Adrenal gland (tissue), 19 donors: ENCODE measurements at regions of chr6 and their contacts with region 1.

Region 1: DNA sequence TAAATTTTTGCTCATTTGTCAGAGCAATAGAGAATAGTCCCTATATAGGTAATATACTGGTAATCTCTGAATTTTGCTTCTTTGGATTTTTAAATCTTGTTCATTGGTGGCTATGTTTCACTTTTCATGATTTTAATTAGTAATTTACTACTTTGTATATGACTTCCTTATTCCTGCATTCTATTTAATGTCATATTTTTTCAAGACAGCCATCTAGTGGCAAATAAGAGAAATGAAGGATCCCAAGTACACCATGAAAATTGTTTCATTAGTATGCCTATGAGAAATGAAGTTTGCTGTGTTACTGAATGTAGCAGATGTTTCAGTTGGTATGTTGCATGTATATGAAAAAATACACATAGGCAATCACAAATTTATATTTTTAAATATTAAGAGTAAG is 82.4 kb downstream of the ZNF292 start:
- DNase-seq: no peak
- H3K4me3 ChIP-seq: no peak overlapping the region
- H3K27ac ChIP-seq: no peak overlapping the region
- H3K4me1 ChIP-seq: no peaks in the 10 kb centered on the region
- H3K27me3 ChIP-seq: no peaks in the 10 kb centered on the region
- CTCF ChIP-seq: peak; percentile 26 to 65 (median 58)
- POLR2A ChIP-seq: no peak

Region 2: GRCh38 chr6:87029711-87030314 is 208.0 kb before region 1 on chr6:
- intact Hi-C with region 1: no loop called
- DNase-seq: peak in 2 of 7 donors; percentile 7 to 25
- H3K4me3 ChIP-seq: no peak overlapping the region
- H3K27ac ChIP-seq: no peak overlapping the region
- H3K4me1 ChIP-seq: no peaks in the 10 kb centered on the region
- H3K27me3 ChIP-seq: no peaks in the 10 kb centered on the region
- CTCF ChIP-seq: peak; percentile 28 to 69 (median 47)
- POLR2A ChIP-seq: no peak

Region 3: GRCh38 chr6:87139236-87139635 is 98.6 kb before region 1 on chr6:
- intact Hi-C with region 1: loop called in 1 of 2 experiments (anchors 2 kb)
- DNase-seq: peak in 5 of 7 donors; percentile 39 to 55 (median 43)
- H3K4me3 ChIP-seq: no peak overlapping the region
- H3K27ac ChIP-seq: no peak overlapping the region
- H3K4me1 ChIP-seq: no peaks in the 10 kb centered on the region
- H3K27me3 ChIP-seq: no peaks in the 10 kb centered on the region
- CTCF ChIP-seq: peak; percentile 48 to 86 (median 78)
- POLR2A ChIP-seq: no peak

Region 4: DNA sequence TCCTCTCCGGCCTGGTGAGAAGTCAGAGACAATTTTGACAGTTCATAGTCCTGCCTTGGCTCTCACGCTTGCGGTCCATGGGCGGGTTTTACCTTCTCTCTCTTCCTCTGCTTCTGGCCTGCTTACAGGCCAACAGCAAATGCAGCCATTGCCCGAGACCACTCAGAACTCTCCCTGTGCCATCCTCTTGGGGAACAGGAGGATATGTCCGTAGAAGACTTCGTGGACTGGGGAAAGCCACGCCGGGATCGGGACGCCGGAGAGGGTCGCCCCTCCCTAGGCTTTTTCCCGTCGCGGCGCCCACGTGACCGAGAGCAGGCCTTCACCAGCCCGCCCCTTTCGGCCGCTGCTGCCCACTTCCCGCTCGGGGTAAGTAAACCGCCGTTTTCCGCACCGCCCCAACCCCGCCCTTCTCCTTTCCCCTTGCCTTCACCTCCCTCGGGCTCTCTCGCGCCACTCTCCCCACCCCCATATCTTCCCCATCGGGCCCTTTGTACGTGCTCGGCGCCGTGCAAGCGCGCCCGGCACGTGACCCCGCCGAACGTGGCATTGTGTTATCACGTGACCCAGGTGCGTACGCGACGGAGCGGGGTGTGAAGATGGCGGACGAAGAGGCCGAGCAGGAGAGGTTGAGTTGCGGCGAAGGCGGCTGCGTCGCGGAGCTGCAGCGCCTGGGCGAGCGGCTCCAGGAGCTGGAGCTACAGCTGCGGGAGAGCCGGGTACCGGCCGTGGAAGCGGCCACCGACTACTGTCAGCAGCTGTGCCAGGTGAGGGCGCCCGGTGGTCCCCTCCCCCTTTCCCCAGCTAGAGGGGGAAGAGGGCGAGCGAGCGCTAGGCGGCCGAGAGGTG is 82.6 kb before region 1 on chr6 and contains the start of gene ZNF292:
- intact Hi-C with region 1: loop called in 1 of 2 experiments (anchors 10 kb)
- DNase-seq: peak; percentile 96 to 98 (median 97)
- H3K4me3 ChIP-seq: peak within 1 kb of the TSS; percentile 64 to 91 (median 84)
- H3K27ac ChIP-seq: peak within 1 kb of the TSS; percentile 84 to 99 (median 96)
- H3K4me1 ChIP-seq: peaks cover 17 to 60% of the 10 kb centered on the region in 2 donors
- H3K27me3 ChIP-seq: no peaks in the 10 kb centered on the region
- CTCF ChIP-seq: peak in 1 of 6 experiments; percentile 10
- POLR2A ChIP-seq: peak; percentile 48 to 72
- total RNA-seq, gene ZNF292: 10.5 to 57.2 (median 32.8) TPM

Region 5: GRCh38 chr6:87341899-87342298 is 104.1 kb after region 1 on chr6:
- intact Hi-C with region 1: no loop called
- DNase-seq: no peak
- H3K4me3 ChIP-seq: no peak overlapping the region
- H3K27ac ChIP-seq: no peak overlapping the region
- H3K4me1 ChIP-seq: peaks cover 12 to 17% of the 10 kb centered on the region in 2 donors
- H3K27me3 ChIP-seq: no peaks in the 10 kb centered on the region
- CTCF ChIP-seq: no peak
- POLR2A ChIP-seq: no peak